Sigmoid colon (tissue), 7 donors: ENCODE measurements at regions of chr11 and their contacts with region 1.

Region 1: GRCh38 chr11:20056109-20056949 is 103.9 kb downstream of the DBX1 start:
- DNase-seq: peak; percentile 85
- H3K4me3 ChIP-seq: no peak overlapping the region
- H3K27ac ChIP-seq: peak overlapping the region; percentile 46 to 68 (median 56)
- H3K4me1 ChIP-seq: peaks cover 0 to 56% (median 49%) of the 10 kb centered on the region in 4 donors
- H3K27me3 ChIP-seq: no peaks in the 10 kb centered on the region
- CTCF ChIP-seq: no peak
- EP300 ChIP-seq: no peak
- POLR2A ChIP-seq: no peak

Region 2: GRCh38 chr11:20097319-20098221 is 41.2 kb after region 1 on chr11:
- intact Hi-C with region 1: loop called (anchors 5 kb)
- DNase-seq: no peak
- H3K4me3 ChIP-seq: no peak overlapping the region
- H3K27ac ChIP-seq: peak overlapping the region; percentile 37 to 70 (median 58)
- H3K4me1 ChIP-seq: peaks cover 0 to 33% (median 18%) of the 10 kb centered on the region in 4 donors
- H3K27me3 ChIP-seq: no peaks in the 10 kb centered on the region
- CTCF ChIP-seq: no peak
- EP300 ChIP-seq: no peak
- POLR2A ChIP-seq: no peak

Region 3: GRCh38 chr11:20110908-20111669 is 54.8 kb after region 1 on chr11:
- intact Hi-C with region 1: loop called (anchors 5 kb)
- DNase-seq: no peak
- H3K4me3 ChIP-seq: no peak overlapping the region
- H3K27ac ChIP-seq: peak overlapping the region; percentile 79 to 93 (median 88)
- H3K4me1 ChIP-seq: peaks cover 0 to 81% (median 69%) of the 10 kb centered on the region in 4 donors
- H3K27me3 ChIP-seq: no peaks in the 10 kb centered on the region
- CTCF ChIP-seq: peak; percentile 23 to 74 (median 70)
- EP300 ChIP-seq: peak; percentile 44 to 93 (median 89)
- POLR2A ChIP-seq: no peak